Naive thymus-derived CD8-positive, alpha-beta T cell (primary cell): ENCODE measurements at regions of chr3 and their contacts with region 1.

Region 1: GRCh38 chr3:45938864-45939263 is 4.4 kb upstream of the CXCR6 start:
- DNase-seq: peak; percentile 63 to 90 (median 82)
- ATAC-seq: peak; percentile 68 to 77
- H3K4me3 Mint-ChIP-seq: no peak overlapping the region
- H3K27ac Mint-ChIP-seq: peak overlapping the region in 3 of 10 donors; percentile 8 to 55 (median 37)
- H3K4me1 Mint-ChIP-seq: peaks cover 17 to 37% (median 35%) of the 10 kb centered on the region in 4 donors
- H3K27me3 Mint-ChIP-seq: no peaks in the 10 kb centered on the region

Region 2: DNA sequence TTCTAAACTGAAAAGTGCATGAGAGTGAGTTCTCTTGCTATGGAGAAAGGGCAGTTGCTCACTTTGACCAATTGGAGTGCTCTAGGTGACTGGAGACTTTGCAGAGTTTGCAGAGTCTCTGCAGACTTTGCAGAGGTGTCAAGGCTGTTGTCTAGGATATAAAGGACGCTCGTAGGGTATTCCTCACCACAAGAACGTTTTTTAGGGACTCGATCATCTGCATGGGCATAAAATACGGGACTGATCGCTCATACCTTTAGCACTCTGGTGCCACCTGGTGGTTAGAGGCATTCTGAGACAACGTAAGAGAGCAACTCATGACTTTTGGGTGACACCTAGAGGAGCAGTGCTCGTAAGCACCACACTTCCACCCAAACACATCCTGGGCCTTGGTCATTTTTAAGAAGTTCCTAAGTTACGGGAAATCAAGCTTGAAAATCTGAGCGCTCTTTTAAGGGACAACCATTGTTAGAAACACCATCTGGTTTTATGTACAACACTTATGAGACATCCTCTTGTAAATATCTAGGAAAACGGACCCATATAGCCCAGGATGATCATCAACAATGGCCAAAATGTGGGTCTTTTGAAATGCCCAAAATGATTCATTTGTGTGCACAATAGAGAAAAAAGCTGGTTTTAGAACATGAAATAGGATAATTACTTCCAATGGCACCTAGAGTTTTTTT is 140.0 kb after region 1 on chr3:
- POLR2A ChIA-PET with region 1: interaction called, 21 read pairs
- DNase-seq: peak; percentile 76 to 95 (median 85)
- ATAC-seq: peak; percentile 99 to 100
- H3K4me3 Mint-ChIP-seq: peak overlapping the region in 3 of 10 donors; percentile 32 to 52 (median 37)
- H3K27ac Mint-ChIP-seq: peak overlapping the region in 1 of 10 donors; percentile 20
- H3K4me1 Mint-ChIP-seq: peaks cover 2 to 10% (median 6%) of the 10 kb centered on the region in 4 donors
- H3K27me3 Mint-ChIP-seq: peaks cover 0 to 1% (median 0%) of the 10 kb centered on the region in 5 donors